ENCODE measurements at regions of chr5 and their contacts with region 1.

Region 1: DNA sequence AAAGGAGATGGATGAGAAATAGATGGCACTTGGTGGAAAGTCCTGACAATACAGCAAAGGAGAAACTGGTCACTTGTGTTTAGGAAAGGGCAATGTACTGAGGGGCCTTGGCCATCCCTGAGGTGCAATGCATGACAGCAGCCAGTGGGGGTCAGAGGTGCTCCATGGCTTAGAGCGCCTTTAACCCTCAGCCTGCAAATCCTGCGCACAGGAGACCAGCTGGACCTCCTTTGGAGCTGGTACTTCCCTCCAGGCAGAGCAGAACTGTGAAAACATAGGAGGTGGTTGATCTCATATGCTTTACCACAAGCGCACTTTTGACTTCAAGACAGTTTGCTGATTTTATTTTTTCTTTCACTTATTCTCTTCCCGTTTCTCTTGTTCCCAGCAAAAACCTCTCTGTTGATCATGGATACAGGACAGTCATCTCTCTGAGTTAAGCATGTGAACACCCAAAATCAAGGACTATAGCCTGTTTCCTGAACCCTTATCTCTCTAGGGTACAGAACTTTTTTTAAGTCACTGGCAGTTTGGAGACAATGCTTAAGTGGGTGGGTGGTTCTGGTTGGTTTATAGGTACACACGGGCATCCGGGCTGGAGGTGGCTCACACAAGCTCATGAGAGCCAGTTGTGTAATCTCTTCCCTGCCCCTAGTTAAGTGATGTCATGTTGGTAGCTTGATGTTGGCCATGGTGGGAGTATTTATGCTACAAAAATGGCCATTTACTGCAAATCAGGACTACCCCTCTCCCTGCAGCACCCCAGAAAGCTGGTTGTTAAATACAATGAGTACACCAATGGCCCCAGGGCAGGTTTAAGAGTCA is 37.6 kb upstream of the ANKRD55 start:
- DNase-seq: peak; percentile 93
- ATAC-seq: peak; percentile 99
- H3K4me3 ChIP-seq: no peak overlapping the region
- H3K27ac ChIP-seq: peak overlapping the region; percentile 80
- H3K4me1 ChIP-seq: peaks cover 11% of the 10 kb centered on the region
- H3K27me3 ChIP-seq: no peaks in the 10 kb centered on the region
- CTCF ChIP-seq: peak; percentile 98
- POLR2A ChIP-seq: peak; percentile 64; the same call in 1 of the 2 replicates
- RAD21 ChIP-seq: peak; percentile 100

Region 2: GRCh38 chr5:55936100-55936693 is 334.6 kb before region 1 on chr5:
- CTCF ChIA-PET with region 1: interaction called, 6 read pairs
- POLR2A ChIA-PET with region 1: interaction called, 29 read pairs
- dilution Hi-C with region 1: no loop called
- in situ Hi-C with region 1: no loop called
- intact Hi-C with region 1: loop called (anchors 1 kb)
- DNase-seq: peak; percentile 92
- ATAC-seq: peak; percentile 74
- H3K4me3 ChIP-seq: no peak overlapping the region
- H3K27ac ChIP-seq: no peak overlapping the region
- H3K4me1 ChIP-seq: no peaks in the 10 kb centered on the region
- H3K27me3 ChIP-seq: no peaks in the 10 kb centered on the region
- CTCF ChIP-seq: peak; percentile 91
- POLR2A ChIP-seq: no peak
- RAD21 ChIP-seq: peak; percentile 83

Region 3: DNA sequence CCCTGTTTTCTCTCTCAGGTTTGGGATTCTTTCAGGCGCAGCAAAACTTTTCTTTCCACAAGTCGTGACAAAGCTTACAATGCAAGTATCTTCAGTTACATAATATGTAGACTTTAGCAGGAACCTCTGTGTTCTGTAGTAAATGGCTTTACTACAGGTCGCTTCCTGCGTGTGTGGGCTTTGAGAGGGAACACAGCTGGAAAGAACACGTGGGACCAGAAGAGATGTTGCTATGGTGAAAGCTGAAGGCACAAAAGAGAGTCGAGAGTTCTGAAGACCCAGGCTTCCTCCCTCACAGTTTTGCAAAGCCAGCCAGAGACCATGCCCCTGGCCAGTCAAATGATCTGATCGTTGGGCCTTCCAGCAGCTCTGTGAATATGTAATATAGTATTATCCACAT is 41.7 kb before region 1 on chr5:
- CTCF ChIA-PET with region 1: no interaction called
- POLR2A ChIA-PET with region 1: no interaction called
- dilution Hi-C with region 1: no loop called
- in situ Hi-C with region 1: no loop called
- intact Hi-C with region 1: no loop called
- DNase-seq: no peak
- ATAC-seq: no peak
- H3K4me3 ChIP-seq: no peak overlapping the region
- H3K27ac ChIP-seq: no peak overlapping the region
- H3K4me1 ChIP-seq: peaks cover 2% of the 10 kb centered on the region; the same call in 1 of the 2 replicates
- H3K27me3 ChIP-seq: no peaks in the 10 kb centered on the region
- CTCF ChIP-seq: no peak
- POLR2A ChIP-seq: no peak
- RAD21 ChIP-seq: no peak

Region 4: GRCh38 chr5:56259002-56259511 is 11.7 kb before region 1 on chr5:
- CTCF ChIA-PET with region 1: no interaction called
- POLR2A ChIA-PET with region 1: no interaction called
- dilution Hi-C with region 1: no loop called
- in situ Hi-C with region 1: no loop called
- intact Hi-C with region 1: no loop called
- DNase-seq: peak; percentile 97
- ATAC-seq: peak; percentile 96
- H3K4me3 ChIP-seq: peak overlapping the region; percentile 17; the same call in 1 of the 2 replicates
- H3K27ac ChIP-seq: peak overlapping the region; percentile 91
- H3K4me1 ChIP-seq: peaks cover 12% of the 10 kb centered on the region
- H3K27me3 ChIP-seq: no peaks in the 10 kb centered on the region
- CTCF ChIP-seq: no peak
- POLR2A ChIP-seq: no peak
- RAD21 ChIP-seq: no peak

Region 5: GRCh38 chr5:56565644-56566043 is 294.9 kb after region 1 on chr5:
- CTCF ChIA-PET with region 1: no interaction called
- POLR2A ChIA-PET with region 1: no interaction called
- dilution Hi-C with region 1: no loop called
- in situ Hi-C with region 1: no loop called
- intact Hi-C with region 1: loop called (anchors 5 kb)
- DNase-seq: no peak
- ATAC-seq: no peak
- H3K4me3 ChIP-seq: no peak overlapping the region
- H3K27ac ChIP-seq: peak overlapping the region; percentile 0; the same call in 1 of the 2 replicates
- H3K4me1 ChIP-seq: peaks cover 10% of the 10 kb centered on the region
- H3K27me3 ChIP-seq: no peaks in the 10 kb centered on the region
- CTCF ChIP-seq: no peak
- POLR2A ChIP-seq: no peak
- RAD21 ChIP-seq: no peak

Region 6: GRCh38 chr5:56814963-56815658 is 544.3 kb after region 1 on chr5 and contains the start of gene MAP3K1:
- CTCF ChIA-PET with region 1: no interaction called
- POLR2A ChIA-PET with region 1: no interaction called
- dilution Hi-C with region 1: no loop called
- in situ Hi-C with region 1: no loop called
- intact Hi-C with region 1: loop called (anchors 1 kb)
- DNase-seq: peak; percentile 60
- ATAC-seq: peak; percentile 93
- H3K4me3 ChIP-seq: peak within 1 kb of the TSS; percentile 99
- H3K27ac ChIP-seq: peak within 1 kb of the TSS; percentile 83
- H3K4me1 ChIP-seq: peaks cover 3% of the 10 kb centered on the region; the same call in 1 of the 2 replicates
- H3K27me3 ChIP-seq: no peaks in the 10 kb centered on the region
- CTCF ChIP-seq: no peak
- POLR2A ChIP-seq: no peak
- RAD21 ChIP-seq: no peak
- total RNA-seq, gene MAP3K1: 18.8 and 21.9 TPM in 2 replicates

Region 7: DNA sequence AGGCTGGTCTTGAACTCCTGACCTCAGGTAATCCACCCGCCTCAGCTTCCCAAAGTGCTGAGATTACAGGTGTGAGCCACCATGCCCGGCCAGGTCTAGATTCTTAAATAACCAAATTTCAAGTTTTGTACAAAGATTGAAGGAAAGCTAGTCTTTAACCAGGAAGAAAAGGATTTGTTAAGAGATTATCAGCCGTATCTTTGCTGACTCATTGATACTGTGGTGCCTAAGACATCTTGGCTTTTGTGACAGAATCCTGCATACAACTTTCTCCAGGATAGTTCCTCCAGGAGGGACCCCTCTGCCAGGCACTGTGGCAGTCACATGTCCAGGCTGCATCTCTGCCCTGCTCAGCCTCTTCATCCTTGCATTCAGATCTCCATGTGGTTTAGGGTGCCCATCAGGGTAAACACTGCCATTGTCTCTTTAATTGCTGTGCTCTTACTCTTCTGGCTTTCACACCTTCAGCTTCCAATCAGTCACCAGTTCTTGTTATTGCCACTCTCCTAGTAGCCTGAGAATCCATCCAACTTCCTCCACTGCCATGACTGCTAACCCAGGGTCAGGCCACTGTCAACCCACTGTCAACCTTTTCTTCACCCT is 554.5 kb after region 1 on chr5:
- CTCF ChIA-PET with region 1: no interaction called
- POLR2A ChIA-PET with region 1: no interaction called
- dilution Hi-C with region 1: no loop called
- in situ Hi-C with region 1: no loop called
- intact Hi-C with region 1: no loop called
- DNase-seq: no peak
- ATAC-seq: no peak
- H3K4me3 ChIP-seq: no peak overlapping the region
- H3K27ac ChIP-seq: no peak overlapping the region
- H3K4me1 ChIP-seq: peaks cover 24% of the 10 kb centered on the region
- H3K27me3 ChIP-seq: no peaks in the 10 kb centered on the region
- CTCF ChIP-seq: no peak
- POLR2A ChIP-seq: no peak
- RAD21 ChIP-seq: no peak

Region 8: GRCh38 chr5:57137401-57137800 is 866.6 kb after region 1 on chr5:
- CTCF ChIA-PET with region 1: interaction called, 8 read pairs
- POLR2A ChIA-PET with region 1: no interaction called
- dilution Hi-C with region 1: no loop called
- in situ Hi-C with region 1: no loop called
- intact Hi-C with region 1: loop called (anchors 1 kb)
- DNase-seq: no peak
- ATAC-seq: no peak
- H3K4me3 ChIP-seq: no peak overlapping the region
- H3K27ac ChIP-seq: no peak overlapping the region
- H3K4me1 ChIP-seq: no peaks in the 10 kb centered on the region
- H3K27me3 ChIP-seq: peaks cover 1% of the 10 kb centered on the region; the same call in 1 of the 2 replicates
- CTCF ChIP-seq: no peak
- POLR2A ChIP-seq: no peak
- RAD21 ChIP-seq: no peak

Region 9: DNA sequence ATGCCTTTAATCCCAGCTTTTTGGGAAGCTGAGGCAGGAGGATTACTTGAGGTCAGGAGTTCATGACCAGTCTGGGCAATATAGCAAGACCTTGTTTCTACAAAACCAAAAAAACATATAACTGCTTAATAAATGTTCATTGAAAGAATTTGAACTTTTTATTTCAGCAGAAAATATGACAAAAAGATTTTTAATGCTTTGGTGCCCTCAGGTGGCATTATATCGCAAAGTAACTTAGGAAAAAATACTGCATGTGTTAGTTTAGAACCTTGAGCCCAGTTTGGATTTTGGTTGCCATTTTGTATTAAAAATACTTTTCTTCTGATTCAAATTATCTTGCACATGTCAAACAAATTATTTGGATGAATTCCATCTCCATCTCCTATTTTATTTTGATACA is 1006.3 kb after region 1 on chr5:
- CTCF ChIA-PET with region 1: no interaction called
- POLR2A ChIA-PET with region 1: no interaction called
- dilution Hi-C with region 1: no loop called
- in situ Hi-C with region 1: no loop called
- intact Hi-C with region 1: loop called (anchors 1 kb)
- DNase-seq: peak; percentile 40
- ATAC-seq: peak; percentile 66
- H3K4me3 ChIP-seq: no peak overlapping the region
- H3K27ac ChIP-seq: no peak overlapping the region
- H3K4me1 ChIP-seq: no peaks in the 10 kb centered on the region
- H3K27me3 ChIP-seq: no peaks in the 10 kb centered on the region
- CTCF ChIP-seq: peak; percentile 55
- POLR2A ChIP-seq: no peak
- RAD21 ChIP-seq: peak; percentile 57

Measured in IMR-90 (cell line).